ENCODE measurements at regions of chr15 and their contacts with region 1.

Region 1: GRCh38 chr15:98169551-98169950 is 209.0 kb downstream of the ARRDC4 start:
- DNase-seq: peak; percentile 51 to 61
- ATAC-seq: peak; percentile 85 to 95 (median 91)
- H3K4me3 ChIP-seq: no peak overlapping the region
- H3K4me3 Mint-ChIP-seq: peak overlapping the region; percentile 51
- H3K27ac ChIP-seq: no peak overlapping the region
- H3K27ac Mint-ChIP-seq: peak overlapping the region; percentile 69 to 84
- H3K4me1 ChIP-seq: peaks cover 2% of the 10 kb centered on the region
- H3K4me1 Mint-ChIP-seq: peaks cover 14 to 15% of the 10 kb centered on the region in 2 donors
- H3K27me3 ChIP-seq: no peaks in the 10 kb centered on the region
- H3K27me3 Mint-ChIP-seq: peaks cover 42 to 65% of the 10 kb centered on the region in 2 donors
- CTCF ChIP-seq: no peak

Region 2: DNA sequence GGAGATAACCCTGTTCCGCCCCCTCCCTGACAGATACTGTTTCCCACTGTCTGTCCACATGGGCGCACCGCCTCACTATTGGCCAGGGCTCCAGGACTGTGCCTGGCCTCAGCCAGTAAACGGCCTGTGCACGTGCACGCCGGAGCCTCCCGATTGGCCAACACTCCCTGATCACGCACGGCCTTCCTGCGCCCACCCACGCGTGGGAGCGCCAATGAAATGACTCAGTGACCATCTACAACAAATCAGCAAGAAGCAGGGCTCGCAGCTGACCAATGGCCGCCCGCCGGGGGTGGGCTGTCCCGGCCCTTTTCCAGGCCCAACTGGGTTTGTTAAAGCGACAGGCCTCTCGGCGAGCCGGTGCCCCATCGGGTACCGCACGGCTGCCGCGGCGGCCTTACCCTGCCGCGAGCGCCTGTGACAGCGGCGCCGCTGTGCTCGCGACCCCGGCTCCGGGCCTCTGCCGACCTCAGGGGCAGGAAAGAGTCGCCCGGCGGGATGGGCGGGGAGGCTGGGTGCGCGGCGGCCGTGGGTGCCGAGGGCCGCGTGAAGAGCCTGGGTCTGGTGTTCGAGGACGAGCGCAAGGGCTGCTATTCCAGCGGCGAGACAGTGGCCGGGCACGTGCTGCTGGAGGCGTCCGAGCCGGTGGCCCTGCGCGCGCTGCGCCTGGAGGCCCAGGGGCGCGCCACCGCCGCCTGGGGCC is 209.0 kb before region 1 on chr15 and contains the start of gene ARRDC4:
- intact Hi-C with region 1: loop called (anchors 1 kb)
- DNase-seq: peak; percentile 97 to 99
- ATAC-seq: peak; percentile 91 to 98 (median 92)
- H3K4me3 ChIP-seq: peak within 1 kb of the TSS; percentile 35
- H3K4me3 Mint-ChIP-seq: peak within 1 kb of the TSS; percentile 95
- H3K27ac ChIP-seq: peak within 1 kb of the TSS; percentile 68
- H3K27ac Mint-ChIP-seq: peak within 1 kb of the TSS; percentile 92 to 95
- H3K4me1 ChIP-seq: peaks cover 13% of the 10 kb centered on the region
- H3K4me1 Mint-ChIP-seq: peaks cover 39 to 42% of the 10 kb centered on the region in 2 donors
- H3K27me3 ChIP-seq: no peaks in the 10 kb centered on the region
- H3K27me3 Mint-ChIP-seq: peaks cover 0 to 3% of the 10 kb centered on the region in 2 donors
- CTCF ChIP-seq: no peak
- total RNA-seq, gene ARRDC4: 6.6 to 7.3 (median 7.0) TPM

Region 3: DNA sequence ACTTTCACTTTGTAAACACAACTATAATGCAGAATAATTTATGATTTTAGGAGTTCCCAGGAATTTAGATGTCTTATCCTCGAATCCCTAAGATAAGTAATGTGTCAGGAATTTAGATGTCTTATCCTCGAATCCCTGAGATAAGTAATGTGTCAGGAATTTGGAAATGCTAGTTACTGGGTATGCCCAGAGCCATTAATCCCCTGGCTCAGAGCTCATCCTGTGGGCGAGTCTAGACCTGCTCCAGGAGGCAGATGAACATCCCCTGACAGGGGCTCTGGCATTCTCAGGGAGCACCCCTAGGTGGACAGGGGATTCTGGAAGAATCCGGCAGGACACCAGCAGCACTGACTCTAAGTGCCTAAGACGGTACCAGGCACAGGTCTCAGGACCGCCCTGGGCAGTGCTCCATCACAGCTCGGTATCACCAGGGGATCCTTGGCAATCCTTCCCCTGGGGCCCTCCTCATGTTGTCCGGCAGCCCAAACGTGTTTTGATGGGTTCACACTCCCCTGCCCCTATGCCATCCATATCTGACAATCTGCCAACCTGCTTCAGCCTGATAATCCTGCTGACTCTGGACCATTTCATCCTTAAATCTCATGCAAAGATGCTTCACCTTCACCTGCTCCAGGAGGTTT is 45.6 kb before region 1 on chr15:
- intact Hi-C with region 1: loop called (anchors 1 kb)
- DNase-seq: no peak
- ATAC-seq: no peak
- H3K4me3 ChIP-seq: no peak overlapping the region
- H3K4me3 Mint-ChIP-seq: no peak overlapping the region
- H3K27ac ChIP-seq: no peak overlapping the region
- H3K27ac Mint-ChIP-seq: no peak overlapping the region
- H3K4me1 ChIP-seq: peaks cover 16% of the 10 kb centered on the region
- H3K4me1 Mint-ChIP-seq: peaks cover 33 to 42% of the 10 kb centered on the region in 2 donors
- H3K27me3 ChIP-seq: no peaks in the 10 kb centered on the region
- H3K27me3 Mint-ChIP-seq: peaks cover 0 to 3% of the 10 kb centered on the region in 2 donors
- CTCF ChIP-seq: no peak

Measured in natural killer cell (primary cell).